GM10248 (cell line): ENCODE measurements at regions of chr4 and their contacts with region 1.

Region 1: GRCh38 chr4:67087897-67088296 is 457.4 kb downstream of the CENPC start:
- DNase-seq: peak; percentile 18
- CTCF ChIP-seq: peak; percentile 74

Region 2: GRCh38 chr4:67103001-67103747 is 15.3 kb after region 1 on chr4:
- CTCF ChIA-PET with region 1: interaction called, 17 read pairs
- POLR2A ChIA-PET with region 1: no interaction called
- DNase-seq: no peak
- CTCF ChIP-seq: no peak

Region 3: GRCh38 chr4:67288964-67289363 is 201.1 kb after region 1 on chr4:
- CTCF ChIA-PET with region 1: interaction called, 19 read pairs
- POLR2A ChIA-PET with region 1: no interaction called
- DNase-seq: peak; percentile 16
- CTCF ChIP-seq: peak; percentile 46

Region 4: GRCh38 chr4:67327262-67328017 is 239.5 kb after region 1 on chr4:
- CTCF ChIA-PET with region 1: interaction called, 59 read pairs
- POLR2A ChIA-PET with region 1: no interaction called
- DNase-seq: peak; percentile 64
- CTCF ChIP-seq: peak; percentile 87

Region 5: GRCh38 chr4:67393699-67394281 is 305.9 kb after region 1 on chr4:
- CTCF ChIA-PET with region 1: interaction called, 13 read pairs
- POLR2A ChIA-PET with region 1: no interaction called
- DNase-seq: peak; percentile 15
- CTCF ChIP-seq: peak; percentile 54